Spleen (tissue), 13 donors: ENCODE measurements at regions of chr4 and their contacts with region 1.

Region 1: DNA sequence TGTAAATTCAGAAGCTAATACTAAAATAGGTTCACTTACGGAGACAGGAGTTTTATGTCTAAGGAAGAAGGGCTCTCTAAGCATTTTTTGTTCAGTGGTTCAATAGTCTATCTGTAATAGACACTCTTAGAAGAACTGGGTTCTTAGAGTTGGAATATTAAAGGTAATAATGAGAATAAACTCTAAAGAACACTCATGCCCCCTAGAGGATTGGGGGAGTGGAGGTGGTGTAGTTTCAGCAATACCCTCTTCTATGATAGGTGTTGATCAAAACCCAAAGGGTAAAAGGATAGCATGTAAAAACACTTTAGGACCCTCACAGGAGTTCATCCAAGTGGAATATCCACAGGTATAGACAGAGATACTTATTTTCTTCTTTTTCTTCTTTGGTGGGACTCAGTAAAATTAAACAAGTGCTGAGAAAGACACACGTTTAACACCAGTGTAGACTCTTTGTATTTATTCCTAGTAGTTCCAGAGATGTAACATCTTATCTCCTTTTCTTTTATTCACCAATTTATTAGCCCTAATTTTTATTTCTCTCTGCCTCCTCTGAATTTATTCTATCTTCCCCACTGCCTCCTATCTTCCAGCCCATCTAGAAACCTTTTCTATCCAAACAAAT is 25.7 kb upstream of the MND1 start:
- DNase-seq: no peak
- H3K4me3 ChIP-seq: no peak overlapping the region
- H3K27ac ChIP-seq: no peak overlapping the region
- H3K4me1 ChIP-seq: no peaks in the 10 kb centered on the region
- H3K27me3 ChIP-seq: no peaks in the 10 kb centered on the region
- CTCF ChIP-seq: peak in 10 of 11 experiments; percentile 19 to 71 (median 58)
- POLR2A ChIP-seq: no peak

Region 2: GRCh38 chr4:152265149-152265621 is 1053.6 kb before region 1 on chr4:
- intact Hi-C with region 1: no loop called
- DNase-seq: no peak
- H3K4me3 ChIP-seq: no peak overlapping the region
- H3K27ac ChIP-seq: no peak overlapping the region
- H3K4me1 ChIP-seq: no peaks in the 10 kb centered on the region
- H3K27me3 ChIP-seq: no peaks in the 10 kb centered on the region
- CTCF ChIP-seq: no peak
- POLR2A ChIP-seq: no peak

Region 3: DNA sequence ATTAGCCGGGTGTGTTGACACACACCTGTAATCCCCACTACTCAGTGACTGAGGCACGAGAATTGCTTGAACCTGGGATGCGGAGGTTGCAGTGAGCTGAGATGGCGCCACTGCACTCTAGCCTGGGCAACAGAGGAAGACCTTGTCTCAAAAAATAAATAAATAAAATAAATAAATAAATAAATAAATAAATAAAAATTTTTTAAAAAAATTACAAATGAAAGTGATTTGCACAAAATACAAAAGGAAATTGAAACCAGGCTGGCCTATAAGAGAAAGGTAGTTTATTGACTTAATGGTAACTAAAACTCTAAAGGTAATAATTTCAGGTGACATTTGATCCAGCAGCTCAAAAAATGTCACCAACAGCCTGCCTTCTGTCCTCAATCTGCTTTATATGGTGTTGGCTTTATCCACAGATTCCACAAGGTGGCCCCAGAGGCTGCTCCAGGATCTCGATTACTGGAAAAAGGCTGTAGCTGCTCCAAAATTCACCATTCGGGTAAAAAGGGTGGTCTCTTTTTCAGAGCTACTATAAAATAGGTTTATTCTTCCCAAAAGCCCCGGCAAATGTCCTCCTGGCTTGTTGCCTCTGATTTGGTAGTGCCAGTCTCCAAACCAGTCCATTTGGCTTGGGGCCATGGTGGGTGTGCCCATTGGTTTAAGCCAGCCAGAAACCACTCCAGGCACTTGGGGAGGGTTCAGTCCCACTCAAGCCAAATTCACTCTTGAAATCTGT is 175.9 kb before region 1 on chr4:
- intact Hi-C with region 1: loop called (anchors 2 kb)
- DNase-seq: no peak
- H3K4me3 ChIP-seq: peak overlapping the region in 1 of 8 donors; percentile 4
- H3K27ac ChIP-seq: peak overlapping the region in 7 of 8 donors; percentile 21 to 71 (median 55)
- H3K4me1 ChIP-seq: peaks cover 0 to 29% (median 14%) of the 10 kb centered on the region in 6 donors
- H3K27me3 ChIP-seq: peaks cover 0 to 10% (median 0%) of the 10 kb centered on the region in 7 donors
- CTCF ChIP-seq: peak; percentile 7 to 76 (median 64)
- POLR2A ChIP-seq: no peak

Region 4: GRCh38 chr4:153221783-153222706 is 96.8 kb before region 1 on chr4:
- intact Hi-C with region 1: loop called (anchors 10 kb)
- DNase-seq: no peak
- H3K4me3 ChIP-seq: peak overlapping the region; percentile 45 to 80 (median 58)
- H3K27ac ChIP-seq: peak overlapping the region; percentile 62 to 88 (median 82)
- H3K4me1 ChIP-seq: peaks cover 7 to 62% (median 24%) of the 10 kb centered on the region in 6 donors
- H3K27me3 ChIP-seq: peaks cover 0 to 22% (median 0%) of the 10 kb centered on the region in 7 donors
- CTCF ChIP-seq: no peak
- POLR2A ChIP-seq: no peak